Heart left ventricle (tissue), 16 donors: ENCODE measurements at regions of chr21 and their contacts with region 1.

Region 1: DNA sequence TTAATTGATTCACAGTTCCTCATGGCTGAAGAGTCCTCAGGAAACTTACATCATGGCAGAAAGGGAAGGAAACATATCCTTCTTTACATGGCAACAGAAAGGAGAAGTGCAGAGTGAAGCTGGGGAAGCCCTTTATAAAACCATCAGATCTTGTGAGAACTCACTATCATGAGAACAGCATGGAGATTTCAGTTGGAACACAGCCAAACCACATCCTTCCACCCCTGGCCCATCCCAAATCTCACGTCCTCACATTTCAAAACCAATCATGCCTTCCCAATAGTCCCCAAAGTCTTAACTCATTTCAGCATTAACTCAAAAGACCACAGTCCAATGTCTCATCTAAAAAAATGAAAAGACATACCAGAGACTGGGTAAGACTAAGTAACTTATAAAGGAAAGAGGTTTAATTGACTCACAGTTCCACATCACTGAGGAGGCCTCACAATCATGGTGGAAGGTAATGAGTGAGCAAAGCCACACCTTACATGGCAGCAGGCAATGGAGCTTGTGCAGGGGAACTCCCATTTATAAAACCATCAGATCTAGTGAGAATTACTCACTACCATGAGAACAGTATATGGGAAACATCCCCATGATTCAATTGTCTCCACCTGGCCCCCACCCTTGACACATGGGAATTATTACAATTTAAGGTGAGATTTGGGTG is 105.2 kb downstream of the MRPL39 start:
- DNase-seq: no peak
- ATAC-seq: peak in 2 of 4 donors; percentile 50 to 59
- H3K4me3 ChIP-seq: no peak overlapping the region
- H3K27ac ChIP-seq: no peak overlapping the region
- H3K4me1 ChIP-seq: no peaks in the 10 kb centered on the region
- H3K27me3 ChIP-seq: no peaks in the 10 kb centered on the region
- CTCF ChIP-seq: no peak
- POLR2A ChIP-seq: no peak

Region 2: DNA sequence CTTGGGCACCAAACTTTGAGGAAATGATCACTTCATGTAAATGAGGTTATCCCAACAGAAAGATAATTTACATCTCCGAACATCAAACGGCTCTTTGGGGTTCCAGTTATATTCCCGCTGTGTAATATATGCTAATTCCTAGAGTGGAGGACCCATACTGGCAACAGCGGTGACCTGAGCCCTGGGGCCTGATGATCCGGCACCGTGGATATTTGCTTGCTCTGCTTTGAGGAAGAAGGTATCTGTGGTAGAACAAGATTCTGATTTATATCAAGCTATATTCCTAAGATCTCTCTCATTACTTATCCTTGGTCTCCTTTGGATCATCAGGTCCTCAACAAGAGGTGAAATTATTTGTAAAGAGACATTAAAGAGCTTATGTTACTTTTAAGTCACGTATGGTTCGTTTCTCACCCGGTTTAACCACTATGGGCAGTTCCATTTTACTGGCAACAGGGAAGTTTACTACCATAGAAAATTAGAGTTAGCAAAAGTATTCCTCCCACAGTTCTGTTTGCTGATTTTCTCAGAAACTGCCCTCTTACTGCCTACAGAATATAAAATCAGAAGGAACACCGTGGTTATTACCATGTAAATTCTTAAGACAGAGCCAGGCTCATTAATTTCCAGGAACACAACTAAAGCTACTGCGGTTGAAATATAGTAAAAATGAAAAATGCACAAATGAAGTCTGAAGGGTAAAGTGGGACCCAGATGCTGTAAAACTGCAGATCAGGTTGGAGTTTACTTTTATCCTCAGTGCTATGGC is 48.4 kb after region 1 on chr21:
- intact Hi-C with region 1: loop called in 1 of 10 experiments (anchors 5 kb)
- DNase-seq: no peak
- ATAC-seq: no peak
- H3K4me3 ChIP-seq: no peak overlapping the region
- H3K27ac ChIP-seq: no peak overlapping the region
- H3K4me1 ChIP-seq: no peaks in the 10 kb centered on the region
- H3K27me3 ChIP-seq: no peaks in the 10 kb centered on the region
- CTCF ChIP-seq: no peak
- POLR2A ChIP-seq: no peak